ENCODE measurements at regions of chr7 and their contacts with region 1.

Region 1: DNA sequence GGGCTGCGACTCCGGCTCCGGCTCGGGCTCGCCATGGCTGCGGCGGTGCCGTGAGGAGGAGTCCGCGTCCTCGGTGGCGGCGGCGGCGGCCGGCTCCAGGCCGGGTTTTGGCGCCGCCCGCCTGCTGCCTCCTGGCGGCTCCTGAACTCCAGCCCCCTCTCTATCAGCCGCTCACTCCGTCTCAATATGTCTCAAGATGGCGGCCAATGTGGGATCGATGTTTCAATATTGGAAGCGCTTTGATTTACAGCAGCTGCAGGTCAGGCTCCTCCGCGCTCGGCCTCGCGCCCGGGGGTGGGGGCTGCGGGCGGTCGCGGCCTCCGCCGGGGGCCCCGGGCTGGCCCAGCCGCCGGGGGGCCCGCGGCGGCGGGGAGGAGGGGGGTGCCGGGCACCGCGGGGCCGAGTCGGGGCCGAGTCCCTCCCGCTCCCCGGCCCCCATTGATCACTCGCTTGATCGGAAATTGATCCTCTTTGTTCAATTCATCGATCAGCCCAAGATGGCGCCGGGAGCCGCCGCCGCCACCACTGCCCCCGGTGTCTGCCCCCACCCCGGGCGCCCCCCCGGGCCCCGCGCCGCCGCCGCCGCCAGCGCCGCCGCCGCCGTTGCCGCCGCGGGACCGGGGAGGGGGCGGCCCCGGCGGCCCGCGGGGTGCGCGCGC is 1.5 kb upstream of the CUX1 start:
- H3K4me3 Mint-ChIP-seq: peak overlapping the region; percentile 75
- H3K27ac Mint-ChIP-seq: peak overlapping the region; percentile 83
- H3K4me1 Mint-ChIP-seq: peaks cover 41% of the 10 kb centered on the region
- H3K27me3 Mint-ChIP-seq: peaks cover 1% of the 10 kb centered on the region

Region 2: GRCh38 chr7:101602484-101603241 is 213.3 kb before region 1 on chr7:
- intact Hi-C with region 1: loop called (anchors 1 kb)
- H3K4me3 Mint-ChIP-seq: no peak overlapping the region
- H3K27ac Mint-ChIP-seq: no peak overlapping the region
- H3K4me1 Mint-ChIP-seq: no peaks in the 10 kb centered on the region
- H3K27me3 Mint-ChIP-seq: peaks cover 11% of the 10 kb centered on the region

Region 3: DNA sequence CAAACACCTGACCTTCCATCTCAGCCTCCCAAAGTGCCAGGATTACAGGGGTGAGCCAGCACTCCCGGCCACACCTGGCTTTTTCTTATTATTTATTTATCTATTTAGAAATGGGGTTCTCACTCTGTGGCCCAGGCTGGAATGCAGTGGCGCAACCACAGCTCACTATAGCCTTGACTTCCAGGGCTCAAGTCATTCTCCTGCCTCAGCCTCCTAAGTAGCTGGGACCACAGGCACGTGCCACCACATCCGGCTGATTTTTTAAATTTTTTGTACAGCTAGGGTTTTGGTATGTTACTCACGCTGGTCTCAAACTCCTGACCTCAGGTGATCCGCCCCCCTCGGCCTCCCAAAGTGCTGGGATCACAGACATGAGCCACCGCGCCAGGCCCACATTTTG is 129.9 kb before region 1 on chr7:
- intact Hi-C with region 1: loop called (anchors 2 kb)
- H3K4me3 Mint-ChIP-seq: no peak overlapping the region
- H3K27ac Mint-ChIP-seq: no peak overlapping the region
- H3K4me1 Mint-ChIP-seq: peaks cover 8% of the 10 kb centered on the region
- H3K27me3 Mint-ChIP-seq: peaks cover 8% of the 10 kb centered on the region

Region 4: GRCh38 chr7:101743241-101743994 is 72.5 kb before region 1 on chr7:
- intact Hi-C with region 1: loop called (anchors 1 kb)
- H3K4me3 Mint-ChIP-seq: peak overlapping the region; percentile 73
- H3K27ac Mint-ChIP-seq: no peak overlapping the region
- H3K4me1 Mint-ChIP-seq: peaks cover 62% of the 10 kb centered on the region
- H3K27me3 Mint-ChIP-seq: peaks cover 23% of the 10 kb centered on the region

Region 5: DNA sequence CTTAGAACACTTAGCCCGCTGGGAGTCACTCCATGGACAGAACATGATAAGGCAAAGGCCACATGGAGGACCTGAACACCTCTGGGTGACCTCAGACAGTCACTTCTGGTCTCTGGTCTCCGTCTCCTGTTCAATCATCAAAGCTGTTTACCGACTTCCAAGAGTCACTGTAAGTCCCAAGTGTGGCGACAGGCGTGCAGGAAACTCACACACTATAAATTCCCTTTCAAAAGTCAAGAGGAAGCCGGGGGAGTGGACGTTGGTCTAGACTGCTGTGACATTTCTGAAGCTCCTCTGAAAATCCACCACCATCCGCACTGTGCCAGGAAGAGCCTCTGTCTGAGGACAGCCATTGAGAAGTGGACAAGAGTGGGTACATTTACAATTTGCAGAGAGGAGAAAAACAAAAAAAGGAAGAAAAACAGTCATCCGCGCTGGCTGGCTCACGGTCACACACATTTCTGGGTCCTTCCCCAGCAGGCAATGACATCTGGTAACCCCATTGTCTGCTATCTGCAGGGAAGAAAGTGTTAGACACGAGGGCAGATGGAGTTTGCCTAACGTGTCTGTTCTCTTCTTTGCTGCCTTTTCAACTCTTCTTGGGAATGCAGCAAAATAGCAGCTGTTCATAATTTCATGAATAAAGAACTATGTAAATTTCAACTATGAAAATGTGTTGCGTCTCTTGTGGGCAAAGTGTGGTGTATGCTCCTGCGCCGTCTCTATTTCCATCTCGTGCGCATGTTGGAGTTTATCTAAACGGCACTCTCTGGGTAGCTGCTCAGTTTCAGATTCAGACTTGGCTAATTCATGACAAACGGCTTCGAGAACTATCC is 31.5 kb before region 1 on chr7:
- intact Hi-C with region 1: no loop called
- H3K4me3 Mint-ChIP-seq: no peak overlapping the region
- H3K27ac Mint-ChIP-seq: no peak overlapping the region
- H3K4me1 Mint-ChIP-seq: peaks cover 19% of the 10 kb centered on the region
- H3K27me3 Mint-ChIP-seq: peaks cover 15% of the 10 kb centered on the region

Region 6: DNA sequence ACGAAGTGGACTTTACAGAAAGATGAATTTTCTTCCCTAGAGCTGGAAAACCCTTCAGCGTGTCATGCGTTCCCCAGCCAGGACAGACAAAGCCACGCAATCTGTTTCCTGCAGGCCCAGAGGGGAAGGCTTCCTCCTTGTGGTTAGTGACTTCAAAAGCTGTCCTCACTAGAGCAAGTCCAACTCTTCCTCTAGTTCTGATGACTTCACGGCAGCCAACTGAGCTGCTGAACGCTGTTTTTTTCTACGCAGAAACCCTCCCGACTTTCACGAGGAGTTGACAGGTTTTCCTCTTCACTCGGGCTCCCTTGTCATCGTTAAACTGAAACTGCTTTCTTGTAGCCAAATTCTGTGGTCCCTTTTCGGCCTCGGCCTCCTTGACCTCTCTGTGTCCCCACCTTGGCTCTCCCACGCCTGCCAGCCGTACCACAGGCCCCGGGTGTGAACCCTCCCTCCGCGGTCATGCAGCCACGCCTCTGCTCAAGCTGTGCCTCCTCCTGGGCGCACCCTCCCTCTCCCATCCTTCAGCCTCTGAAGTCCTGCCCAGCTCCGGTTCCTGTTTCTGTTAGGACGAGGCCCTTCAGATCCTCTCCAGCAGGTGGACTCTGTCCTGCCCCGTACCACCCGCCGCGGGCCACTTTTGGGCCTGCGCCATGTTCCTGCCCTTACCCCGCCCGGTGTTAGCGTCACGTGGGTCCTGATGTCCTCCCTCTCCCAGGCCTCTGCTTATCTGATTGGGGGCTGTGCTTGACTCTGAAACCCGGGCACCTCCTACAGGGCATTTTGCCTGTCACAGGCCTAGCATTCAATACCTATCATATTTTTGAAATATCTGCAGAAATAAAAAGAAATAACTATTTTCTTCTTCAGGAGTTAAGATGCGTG is 40.8 kb after region 1 on chr7:
- intact Hi-C with region 1: loop called (anchors 1 kb)
- H3K4me3 Mint-ChIP-seq: peak overlapping the region; percentile 77
- H3K27ac Mint-ChIP-seq: peak overlapping the region; percentile 97
- H3K4me1 Mint-ChIP-seq: peaks cover 71% of the 10 kb centered on the region
- H3K27me3 Mint-ChIP-seq: no peaks in the 10 kb centered on the region

Region 7: DNA sequence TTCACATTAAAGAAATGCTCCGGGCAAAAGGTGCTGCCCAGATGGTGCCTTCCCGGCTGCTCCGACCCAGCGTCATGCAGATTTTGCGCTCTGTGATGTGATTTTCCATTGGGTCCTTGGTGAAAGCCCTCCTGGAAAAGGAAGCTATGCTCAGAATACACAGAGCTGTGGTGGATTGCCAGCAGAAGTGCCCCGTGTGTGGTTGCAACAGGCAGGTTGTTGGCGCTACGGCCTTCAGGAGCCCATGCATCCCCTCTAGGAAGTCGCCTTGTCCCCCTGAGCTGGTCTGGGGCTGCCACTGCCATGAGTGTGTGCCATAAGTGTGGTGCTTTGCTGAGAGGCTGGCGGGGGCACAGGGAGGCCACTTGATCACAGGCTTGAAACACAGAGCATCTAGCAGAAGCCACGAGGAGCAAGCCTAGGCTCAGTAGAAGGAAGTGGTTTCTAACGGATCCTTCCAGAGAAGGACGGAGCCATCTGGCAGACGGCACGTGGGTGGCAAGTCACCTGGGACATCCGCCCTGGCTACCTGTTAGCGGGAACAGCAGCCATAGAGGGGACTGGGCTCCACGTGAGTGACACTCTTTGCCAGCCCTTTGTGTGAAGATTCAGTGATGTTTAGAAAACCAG is 212.4 kb after region 1 on chr7:
- intact Hi-C with region 1: no loop called
- H3K4me3 Mint-ChIP-seq: no peak overlapping the region
- H3K27ac Mint-ChIP-seq: peak overlapping the region; percentile 41
- H3K4me1 Mint-ChIP-seq: peaks cover 30% of the 10 kb centered on the region
- H3K27me3 Mint-ChIP-seq: no peaks in the 10 kb centered on the region